ENCODE measurements at regions of chr3 and their contacts with region 1.

Region 1: GRCh38 chr3:136177876-136178275 is 18.3 kb downstream of the MSL2 start:
- DNase-seq: no peak
- ATAC-seq: no peak
- H3K4me3 ChIP-seq: no peak overlapping the region
- H3K4me3 Mint-ChIP-seq: peak overlapping the region in 1 of 3 donors; percentile 60
- H3K27ac ChIP-seq: no peak overlapping the region
- H3K27ac Mint-ChIP-seq: no peak overlapping the region
- H3K4me1 ChIP-seq: peaks cover 18 to 54% of the 10 kb centered on the region in 2 experiments
- H3K4me1 Mint-ChIP-seq: peaks cover 61 to 70% (median 67%) of the 10 kb centered on the region in 3 donors
- H3K27me3 ChIP-seq: no peaks in the 10 kb centered on the region
- H3K27me3 Mint-ChIP-seq: no peaks in the 10 kb centered on the region

Region 2: DNA sequence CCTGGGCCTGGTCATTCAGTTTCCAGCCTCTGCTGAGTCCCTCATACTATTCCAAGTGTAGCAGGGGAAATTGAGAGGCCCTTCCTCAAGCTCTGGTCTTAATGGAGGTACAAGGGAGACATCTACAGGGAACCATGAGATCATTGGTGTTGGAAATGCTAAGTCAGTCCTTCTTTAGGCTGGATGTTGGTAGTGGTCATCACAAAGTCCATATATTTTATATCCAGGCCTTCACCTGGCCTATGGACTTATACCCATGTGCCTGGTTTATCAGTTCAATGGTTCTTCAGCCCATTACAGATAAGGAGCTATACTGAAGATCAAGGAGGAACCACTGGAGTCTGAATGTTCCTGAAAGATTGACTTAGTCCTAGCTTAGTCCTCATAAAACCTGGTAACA is 439.3 kb after region 1 on chr3:
- CTCF ChIA-PET with region 1: no interaction called
- POLR2A ChIA-PET with region 1: interaction called in 1 of 2 experiments, 10 read pairs
- DNase-seq: no peak
- ATAC-seq: no peak
- H3K4me3 ChIP-seq: no peak overlapping the region
- H3K4me3 Mint-ChIP-seq: no peak overlapping the region
- H3K27ac ChIP-seq: no peak overlapping the region
- H3K27ac Mint-ChIP-seq: no peak overlapping the region
- H3K4me1 ChIP-seq: peaks cover 0 to 2% of the 10 kb centered on the region in 2 experiments
- H3K4me1 Mint-ChIP-seq: peaks cover 6 to 12% (median 6%) of the 10 kb centered on the region in 3 donors
- H3K27me3 ChIP-seq: no peaks in the 10 kb centered on the region
- H3K27me3 Mint-ChIP-seq: no peaks in the 10 kb centered on the region

Region 3: DNA sequence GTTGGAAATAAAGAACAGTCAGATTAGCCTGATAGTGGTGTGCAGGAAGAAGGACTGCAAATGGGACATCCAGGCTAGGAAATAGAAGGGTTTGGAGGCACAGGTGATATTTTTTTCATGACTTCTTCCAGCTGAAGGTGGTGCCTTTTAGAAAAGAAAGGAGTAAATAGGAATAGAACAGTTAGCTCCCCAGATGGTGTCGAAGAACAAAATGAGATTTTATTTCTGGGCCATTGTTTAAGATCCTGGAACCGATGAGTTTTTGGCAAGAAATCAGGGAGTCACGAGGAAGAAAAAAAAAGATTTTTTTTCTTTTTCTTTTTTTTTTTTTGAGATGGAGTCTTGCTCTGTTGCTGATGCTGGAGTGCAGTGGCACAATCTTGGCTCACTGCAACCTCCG is 674.3 kb after region 1 on chr3:
- CTCF ChIA-PET with region 1: no interaction called
- POLR2A ChIA-PET with region 1: no interaction called
- DNase-seq: no peak
- ATAC-seq: no peak
- H3K4me3 ChIP-seq: no peak overlapping the region
- H3K4me3 Mint-ChIP-seq: no peak overlapping the region
- H3K27ac ChIP-seq: no peak overlapping the region
- H3K27ac Mint-ChIP-seq: no peak overlapping the region
- H3K4me1 ChIP-seq: no peaks in the 10 kb centered on the region
- H3K4me1 Mint-ChIP-seq: peaks cover 11 to 14% (median 13%) of the 10 kb centered on the region in 3 donors
- H3K27me3 ChIP-seq: no peaks in the 10 kb centered on the region
- H3K27me3 Mint-ChIP-seq: no peaks in the 10 kb centered on the region

Measured in T-cell (primary cell).